ENCODE measurements at regions of chr19 and their contacts with region 1.

Region 1: DNA sequence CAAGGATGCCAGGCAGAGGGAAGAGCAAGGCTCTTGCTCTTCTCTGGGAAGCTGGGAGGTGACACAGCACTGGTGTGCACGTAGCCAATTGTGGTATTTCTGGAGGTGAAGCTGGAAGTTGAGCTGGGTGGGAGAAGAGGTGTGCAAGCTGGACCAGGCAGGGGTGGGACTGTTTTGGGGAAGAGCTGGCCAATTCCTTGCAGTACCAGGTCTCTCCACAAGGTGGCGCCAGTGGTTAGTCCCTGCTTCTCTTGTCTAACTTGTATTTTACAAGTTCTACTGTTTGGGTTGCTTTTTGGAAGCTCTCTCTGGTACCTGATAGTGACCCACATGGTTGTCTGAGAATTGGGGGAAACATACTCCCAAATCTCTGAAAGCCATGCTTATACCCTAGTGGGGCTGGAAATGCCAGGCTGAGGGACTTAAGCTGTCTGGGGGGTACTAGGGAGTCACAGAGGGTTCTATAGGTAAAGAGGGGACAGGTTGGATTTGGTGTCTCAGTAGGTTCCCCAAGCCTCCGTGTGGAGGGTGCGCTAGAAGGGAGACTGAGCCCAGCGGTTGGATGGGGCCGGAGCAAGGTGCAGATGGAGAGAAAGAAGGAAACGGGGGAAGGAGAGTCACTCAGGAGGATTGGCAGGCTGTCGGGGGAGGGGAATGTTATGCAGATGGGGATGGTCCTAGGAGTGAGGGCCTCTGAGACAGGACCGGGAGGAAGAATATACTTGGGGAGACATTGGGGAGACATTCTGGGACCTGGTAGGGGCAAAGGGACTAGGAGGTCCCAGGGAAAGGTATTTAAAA is 3.0 kb downstream of the HPN start:
- DNase-seq: peak; percentile 65
- H3K4me3 ChIP-seq: no peak overlapping the region
- H3K27ac ChIP-seq: no peak overlapping the region
- H3K4me1 ChIP-seq: peaks cover 11% of the 10 kb centered on the region
- H3K27me3 ChIP-seq: no peaks in the 10 kb centered on the region
- CTCF ChIP-seq: peak; percentile 96 to 97
- POLR2A ChIP-seq: no peak

Region 2: GRCh38 chr19:34808566-34808965 is 236.0 kb before region 1 on chr19:
- CTCF ChIA-PET with region 1: no interaction called
- POLR2A ChIA-PET with region 1: no interaction called
- dilution Hi-C with region 1: no loop called
- intact Hi-C with region 1: no loop called
- DNase-seq: peak; percentile 13
- H3K4me3 ChIP-seq: no peak overlapping the region
- H3K27ac ChIP-seq: no peak overlapping the region
- H3K4me1 ChIP-seq: no peaks in the 10 kb centered on the region
- H3K27me3 ChIP-seq: peaks cover 0 to 3% of the 10 kb centered on the region in 2 experiments
- CTCF ChIP-seq: no peak
- POLR2A ChIP-seq: no peak

Region 3: DNA sequence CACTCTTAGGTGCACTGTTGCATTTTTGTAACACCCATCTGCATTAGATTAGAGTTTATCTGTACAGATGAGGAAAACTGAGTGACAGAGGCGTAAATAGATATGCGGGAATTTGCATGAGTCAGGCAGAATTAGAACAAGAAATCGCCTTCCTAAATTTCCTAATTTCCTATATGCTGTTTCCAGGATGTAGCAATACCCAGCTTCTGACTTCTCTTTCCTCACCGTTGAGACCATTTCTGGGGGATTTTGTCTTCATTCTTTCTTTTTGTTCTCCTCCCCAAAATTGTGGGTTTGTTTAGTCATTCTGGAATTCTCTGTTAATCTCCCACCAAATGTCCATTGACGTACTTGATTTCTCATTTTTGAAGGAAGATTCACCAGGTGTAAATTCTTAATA is 69.9 kb before region 1 on chr19:
- CTCF ChIA-PET with region 1: interaction called, 12 read pairs
- POLR2A ChIA-PET with region 1: no interaction called
- dilution Hi-C with region 1: no loop called
- intact Hi-C with region 1: loop called (anchors 1 kb)
- DNase-seq: no peak
- H3K4me3 ChIP-seq: no peak overlapping the region
- H3K27ac ChIP-seq: no peak overlapping the region
- H3K4me1 ChIP-seq: no peaks in the 10 kb centered on the region
- H3K27me3 ChIP-seq: no peaks in the 10 kb centered on the region
- CTCF ChIP-seq: no peak
- POLR2A ChIP-seq: no peak

Region 4: DNA sequence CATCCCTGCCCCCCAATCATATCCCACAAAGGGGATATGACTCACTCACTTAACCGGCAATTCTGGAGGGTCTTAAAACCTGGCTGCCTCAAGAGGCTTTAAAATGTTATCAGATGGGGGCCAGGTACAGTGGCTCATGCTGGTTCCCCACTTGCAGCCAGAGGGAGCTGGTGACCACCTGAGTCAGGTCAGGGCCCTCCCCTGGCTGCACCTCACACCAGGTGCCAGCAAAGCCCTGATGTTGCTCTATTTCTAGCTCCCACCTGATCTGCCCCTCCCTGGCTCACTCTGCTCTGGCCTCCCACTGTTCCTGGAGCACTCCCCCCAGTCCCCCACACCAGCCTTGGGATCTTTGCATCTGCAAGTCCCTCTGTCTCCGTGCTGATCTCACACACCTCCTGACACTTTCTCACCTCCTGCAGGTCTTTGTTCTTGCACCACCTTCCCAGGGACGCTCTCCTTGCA is 11.2 kb after region 1 on chr19:
- CTCF ChIA-PET with region 1: interaction called, 35 read pairs
- POLR2A ChIA-PET with region 1: no interaction called
- dilution Hi-C with region 1: no loop called
- intact Hi-C with region 1: no loop called
- DNase-seq: no peak
- H3K4me3 ChIP-seq: no peak overlapping the region
- H3K27ac ChIP-seq: no peak overlapping the region
- H3K4me1 ChIP-seq: no peaks in the 10 kb centered on the region
- H3K27me3 ChIP-seq: peaks cover 0 to 3% of the 10 kb centered on the region in 2 experiments
- CTCF ChIP-seq: no peak
- POLR2A ChIP-seq: no peak

Region 5: DNA sequence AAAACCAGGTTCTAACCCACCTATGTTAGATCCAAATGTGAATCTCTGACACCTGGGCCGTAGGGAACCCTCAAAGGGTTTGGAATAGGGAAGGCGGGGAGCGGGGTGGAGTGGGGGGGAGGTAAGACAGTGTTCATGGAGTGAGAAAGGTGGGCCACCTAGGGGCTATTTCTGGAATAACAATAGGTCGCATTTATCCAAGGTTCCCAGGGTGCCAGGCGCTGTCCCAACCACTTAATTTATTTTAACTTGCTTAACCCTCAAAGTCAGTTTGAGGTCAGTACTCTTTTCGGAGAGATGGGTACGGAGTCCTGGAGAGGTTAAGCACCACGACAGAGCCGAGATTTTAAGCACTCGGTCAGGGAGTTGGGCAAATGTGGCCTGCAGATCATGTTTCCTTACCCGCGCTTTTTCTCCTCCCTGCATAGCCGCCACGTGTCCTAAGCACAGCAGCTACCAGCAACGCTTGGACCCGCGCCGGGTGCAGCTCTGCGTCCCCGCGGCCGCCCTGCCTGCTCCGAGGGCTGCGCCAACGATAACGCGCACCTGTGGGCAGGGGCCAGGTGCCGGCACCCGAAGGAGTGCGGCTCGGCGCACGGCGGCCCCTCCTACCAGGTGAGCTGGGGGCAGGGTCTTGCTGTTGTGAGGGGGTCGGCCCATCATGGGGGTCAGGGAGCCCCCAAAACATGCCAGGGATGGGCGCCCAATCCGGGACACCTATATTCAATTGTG is 46.2 kb after region 1 on chr19:
- CTCF ChIA-PET with region 1: interaction called, 35 read pairs
- POLR2A ChIA-PET with region 1: no interaction called
- dilution Hi-C with region 1: no loop called
- intact Hi-C with region 1: loop called (anchors 1 kb)
- DNase-seq: peak; percentile 57
- H3K4me3 ChIP-seq: no peak overlapping the region
- H3K27ac ChIP-seq: no peak overlapping the region
- H3K4me1 ChIP-seq: no peaks in the 10 kb centered on the region
- H3K27me3 ChIP-seq: peaks cover 1 to 2% of the 10 kb centered on the region in 2 experiments
- CTCF ChIP-seq: peak; percentile 41 to 66
- POLR2A ChIP-seq: no peak

Region 6: DNA sequence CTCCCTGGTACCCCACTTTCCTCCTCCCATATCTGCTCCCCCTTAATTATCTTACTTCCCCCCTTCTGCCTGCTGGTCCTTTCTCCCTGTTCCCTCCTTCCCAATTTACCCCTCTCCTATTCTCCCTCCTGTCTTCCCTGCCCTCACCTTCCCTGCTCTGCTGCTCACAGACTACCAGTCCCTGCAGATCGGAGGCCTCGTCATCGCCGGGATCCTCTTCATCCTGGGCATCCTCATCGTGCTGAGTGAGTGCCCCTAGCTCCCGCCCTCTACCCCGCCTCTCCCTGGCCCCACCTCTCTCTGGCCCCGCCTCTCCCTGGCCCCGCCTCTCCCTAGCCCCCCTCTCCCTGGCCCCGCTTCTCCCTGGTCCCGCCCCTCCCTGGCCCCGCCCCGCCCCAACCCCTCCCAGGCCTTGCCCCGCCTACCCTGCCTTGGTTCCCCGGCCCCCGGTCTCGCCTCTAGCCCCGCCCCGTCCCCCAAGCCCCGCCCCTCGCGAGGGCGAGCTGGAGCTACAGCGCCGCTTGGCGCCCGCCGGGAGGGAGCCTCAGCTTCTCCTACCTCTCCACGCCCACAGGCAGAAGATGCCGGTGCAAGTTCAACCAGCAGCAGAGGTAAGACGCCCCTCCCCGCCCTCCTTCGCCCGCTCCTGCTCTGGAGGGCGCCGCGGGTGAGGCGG is 96.6 kb after region 1 on chr19:
- CTCF ChIA-PET with region 1: interaction called, 24 read pairs
- POLR2A ChIA-PET with region 1: no interaction called
- dilution Hi-C with region 1: no loop called
- intact Hi-C with region 1: no loop called
- DNase-seq: peak; percentile 79
- H3K4me3 ChIP-seq: no peak overlapping the region
- H3K27ac ChIP-seq: no peak overlapping the region
- H3K4me1 ChIP-seq: peaks cover 11% of the 10 kb centered on the region
- H3K27me3 ChIP-seq: peaks cover 16 to 17% of the 10 kb centered on the region in 2 experiments
- CTCF ChIP-seq: peak; percentile 5 to 63
- POLR2A ChIP-seq: no peak

Region 7: GRCh38 chr19:35167251-35167721 is 122.8 kb after region 1 on chr19:
- CTCF ChIA-PET with region 1: no interaction called
- POLR2A ChIA-PET with region 1: no interaction called
- dilution Hi-C with region 1: no loop called
- intact Hi-C with region 1: no loop called
- DNase-seq: no peak
- H3K4me3 ChIP-seq: no peak overlapping the region
- H3K27ac ChIP-seq: no peak overlapping the region
- H3K4me1 ChIP-seq: no peaks in the 10 kb centered on the region
- H3K27me3 ChIP-seq: no peaks in the 10 kb centered on the region
- CTCF ChIP-seq: no peak
- POLR2A ChIP-seq: no peak